Panc1 (cell line): ENCODE measurements at regions of chr11 and their contacts with region 1.

Region 1: GRCh38 chr11:19049351-19049750 is 11.2 kb downstream of the MRGPRX2 start:
- DNase-seq: no peak
- ATAC-seq: no peak
- H3K4me3 ChIP-seq: no peak overlapping the region
- H3K27ac ChIP-seq: no peak overlapping the region
- H3K4me1 ChIP-seq: no peaks in the 10 kb centered on the region
- H3K27me3 ChIP-seq: peaks cover under 1% of the 10 kb centered on the region; the same call in 1 of the 2 replicates
- CTCF ChIP-seq: no peak

Region 2: GRCh38 chr11:18757811-18758210 is 291.5 kb before region 1 on chr11:
- CTCF ChIA-PET with region 1: no interaction called
- POLR2A ChIA-PET with region 1: no interaction called
- in situ Hi-C with region 1: no loop called
- intact Hi-C with region 1: no loop called
- DNase-seq: no peak
- ATAC-seq: no peak
- H3K4me3 ChIP-seq: no peak overlapping the region
- H3K27ac ChIP-seq: no peak overlapping the region
- H3K4me1 ChIP-seq: no peaks in the 10 kb centered on the region
- H3K27me3 ChIP-seq: peaks cover 4% of the 10 kb centered on the region; the same call in 1 of the 2 replicates
- CTCF ChIP-seq: no peak

Region 3: DNA sequence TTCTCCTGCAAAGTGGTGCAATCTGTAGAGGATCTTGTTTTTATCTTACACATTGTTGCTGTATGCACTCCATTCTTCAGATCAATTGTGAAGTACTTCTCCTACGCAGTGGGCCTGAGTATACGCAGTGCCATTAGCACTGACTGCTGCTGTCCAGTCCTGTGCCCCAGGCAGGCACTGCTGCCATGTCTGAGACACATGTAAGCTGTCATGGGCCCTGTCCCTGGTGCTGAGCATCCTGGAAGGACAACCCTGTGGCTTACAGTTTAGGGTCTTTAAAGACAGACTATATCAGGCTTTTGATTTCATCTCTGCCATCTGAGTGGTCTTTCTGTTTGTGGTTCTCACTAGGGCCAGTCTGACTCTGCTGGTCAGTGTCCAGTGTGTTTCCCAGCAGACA is 212.9 kb before region 1 on chr11:
- CTCF ChIA-PET with region 1: interaction called, 15 read pairs
- POLR2A ChIA-PET with region 1: no interaction called
- in situ Hi-C with region 1: no loop called
- intact Hi-C with region 1: no loop called
- DNase-seq: no peak
- ATAC-seq: no peak
- H3K4me3 ChIP-seq: no peak overlapping the region
- H3K27ac ChIP-seq: no peak overlapping the region
- H3K4me1 ChIP-seq: no peaks in the 10 kb centered on the region
- H3K27me3 ChIP-seq: no peaks in the 10 kb centered on the region; the same call in 1 of the 2 replicates
- CTCF ChIP-seq: no peak

Region 4: DNA sequence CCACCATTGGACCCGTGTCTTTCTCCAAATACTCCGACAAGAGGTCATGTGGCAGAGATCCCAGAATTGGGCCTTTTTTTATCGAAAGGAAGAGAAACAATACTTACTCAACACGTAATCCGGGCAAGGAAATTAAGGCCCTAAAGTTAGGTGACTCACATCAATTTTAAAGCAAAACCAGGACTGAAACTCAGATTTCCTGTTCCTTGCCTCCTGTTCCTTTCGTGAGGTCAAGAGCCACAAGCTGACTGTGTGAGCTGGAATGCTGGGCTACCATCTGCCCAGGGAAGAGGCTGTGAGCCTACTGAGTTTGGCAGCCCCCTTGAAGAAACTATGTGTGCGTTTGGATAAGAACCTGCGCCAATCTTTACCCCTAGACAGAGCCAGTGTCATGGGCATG is 38.3 kb after region 1 on chr11:
- CTCF ChIA-PET with region 1: no interaction called
- POLR2A ChIA-PET with region 1: no interaction called
- in situ Hi-C with region 1: no loop called
- intact Hi-C with region 1: no loop called
- DNase-seq: no peak
- ATAC-seq: no peak
- H3K4me3 ChIP-seq: no peak overlapping the region
- H3K27ac ChIP-seq: no peak overlapping the region
- H3K4me1 ChIP-seq: no peaks in the 10 kb centered on the region
- H3K27me3 ChIP-seq: no peaks in the 10 kb centered on the region
- CTCF ChIP-seq: no peak